Pancreas (tissue), 10 donors: ENCODE measurements at regions of chr4 and their contacts with region 1.

Region 1: DNA sequence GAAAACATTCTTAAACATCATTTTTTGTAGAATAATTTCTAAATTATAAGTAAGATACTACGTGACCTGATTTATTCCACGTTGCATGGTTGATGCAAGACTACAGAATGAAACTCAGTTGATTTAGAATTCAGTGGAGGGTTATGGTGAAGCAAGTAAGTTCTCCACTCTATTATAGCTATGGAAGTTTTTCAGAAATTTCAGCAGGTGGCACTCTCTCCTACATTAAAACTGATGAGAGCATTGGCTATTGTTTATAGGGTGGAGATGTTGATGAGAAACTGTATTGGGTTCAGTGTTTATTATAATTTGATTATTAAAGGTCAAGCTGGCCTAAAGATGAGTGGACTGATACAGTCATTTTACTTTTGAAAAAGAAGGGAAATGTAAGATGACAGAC is 88.0 kb downstream of the FNIP2 start:
- DNase-seq: no peak
- ATAC-seq: peak; percentile 38 to 82 (median 76)
- H3K4me3 ChIP-seq: no peak overlapping the region
- H3K27ac ChIP-seq: no peak overlapping the region
- H3K4me1 ChIP-seq: no peaks in the 10 kb centered on the region
- H3K27me3 ChIP-seq: no peaks in the 10 kb centered on the region
- CTCF ChIP-seq: peak in 1 of 4 donors; percentile 33

Region 2: DNA sequence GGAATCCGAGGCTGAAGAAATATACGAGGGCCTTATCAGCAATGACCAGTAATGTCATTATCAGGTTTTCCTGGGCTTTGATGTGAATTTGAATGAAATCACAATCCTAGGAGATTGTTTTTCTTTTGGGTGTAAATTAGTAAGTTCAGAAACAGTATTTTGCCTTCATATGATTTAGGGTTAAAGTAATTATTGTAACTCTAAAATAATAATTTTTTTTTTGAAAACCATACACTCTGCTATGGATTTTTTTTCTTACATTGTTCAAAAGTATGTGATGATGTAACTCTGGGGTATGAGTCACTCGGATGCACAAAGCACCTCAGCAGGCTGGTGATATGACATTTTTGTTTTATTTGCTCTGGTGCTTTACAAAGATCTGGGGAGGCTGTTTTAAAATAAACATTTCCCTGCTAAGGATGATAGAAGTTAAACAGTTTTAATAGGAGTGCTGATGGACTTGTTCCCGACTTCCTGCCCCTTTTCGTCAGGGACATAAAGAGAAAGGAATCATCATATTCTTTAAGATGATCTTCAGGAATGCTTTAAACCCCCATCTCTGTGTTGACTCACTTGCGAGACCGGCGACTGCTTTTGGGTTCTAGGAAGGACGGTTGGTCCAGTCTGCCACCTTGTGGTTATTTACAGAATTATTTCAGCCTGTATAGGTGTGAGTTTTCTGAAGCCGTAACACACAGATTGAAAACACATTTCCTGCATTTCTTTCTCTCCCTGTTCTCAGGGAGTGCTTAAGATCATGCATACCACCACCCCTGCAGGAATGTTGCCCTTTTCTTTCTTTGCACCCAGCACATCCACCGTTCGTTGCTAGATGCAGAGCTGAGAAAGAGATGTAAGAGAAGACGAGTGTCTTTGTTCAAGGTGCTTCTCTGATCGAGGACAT is 318.5 kb after region 1 on chr4:
- intact Hi-C with region 1: loop called in 1 of 3 experiments (anchors 10 kb)
- DNase-seq: peak in 4 of 6 donors; percentile 26 to 59 (median 42)
- ATAC-seq: peak; percentile 91 to 95 (median 94)
- H3K4me3 ChIP-seq: no peak overlapping the region
- H3K27ac ChIP-seq: no peak overlapping the region
- H3K4me1 ChIP-seq: peaks cover 8 to 14% (median 11%) of the 10 kb centered on the region in 3 donors
- H3K27me3 ChIP-seq: no peaks in the 10 kb centered on the region
- CTCF ChIP-seq: peak; percentile 42 to 70 (median 67)

Region 3: GRCh38 chr4:159201168-159201567 is 344.3 kb after region 1 on chr4:
- intact Hi-C with region 1: loop called in 1 of 3 experiments (anchors 5 kb)
- DNase-seq: no peak
- ATAC-seq: no peak
- H3K4me3 ChIP-seq: no peak overlapping the region
- H3K27ac ChIP-seq: no peak overlapping the region
- H3K4me1 ChIP-seq: no peaks in the 10 kb centered on the region
- H3K27me3 ChIP-seq: no peaks in the 10 kb centered on the region
- CTCF ChIP-seq: no peak